GM13976 (cell line): ENCODE measurements at regions of chr2 and their contacts with region 1.

Region 1: DNA sequence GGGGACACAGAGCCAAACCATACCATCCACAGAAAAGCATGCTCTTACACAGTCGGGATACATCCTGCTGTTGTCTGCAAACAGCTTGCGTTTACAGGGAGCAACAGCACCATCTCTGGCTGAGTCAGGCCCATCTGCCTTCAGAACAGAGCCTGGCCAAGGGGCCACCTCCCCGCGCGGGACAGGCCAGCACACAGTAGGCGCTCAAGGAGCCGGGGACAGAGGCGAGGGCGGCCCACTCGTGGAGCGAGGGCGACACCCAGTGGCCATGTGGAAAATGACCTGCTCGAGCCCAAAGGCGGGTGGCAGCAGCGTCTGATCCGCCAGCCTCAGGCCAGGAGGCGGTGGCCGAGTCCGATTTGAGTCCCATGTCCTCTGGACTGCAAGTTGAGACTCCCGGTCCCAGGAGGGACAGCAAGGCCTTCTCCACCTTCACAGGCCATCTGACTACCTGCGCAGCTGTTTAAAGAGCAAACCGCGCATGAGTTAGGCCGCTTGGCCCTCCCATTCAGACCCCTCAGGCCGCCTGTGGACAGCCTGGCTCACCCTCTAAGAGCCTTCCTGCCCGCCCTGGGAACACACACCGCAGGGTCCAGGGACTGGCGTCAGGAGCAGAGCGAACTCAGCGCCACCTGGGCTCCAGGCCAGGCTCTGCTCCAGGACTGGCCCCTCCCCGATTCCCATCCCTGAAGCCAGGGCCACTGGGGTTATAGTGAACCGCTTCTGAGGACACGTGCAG is 38.3 kb downstream of the TTC32 start:
- DNase-seq: peak; percentile 90
- CTCF ChIP-seq: peak; percentile 96

Region 2: GRCh38 chr2:18546567-18546966 is 1316.9 kb before region 1 on chr2:
- in situ Hi-C with region 1: loop called (anchors 25 kb)
- DNase-seq: no peak
- CTCF ChIP-seq: no peak

Region 3: DNA sequence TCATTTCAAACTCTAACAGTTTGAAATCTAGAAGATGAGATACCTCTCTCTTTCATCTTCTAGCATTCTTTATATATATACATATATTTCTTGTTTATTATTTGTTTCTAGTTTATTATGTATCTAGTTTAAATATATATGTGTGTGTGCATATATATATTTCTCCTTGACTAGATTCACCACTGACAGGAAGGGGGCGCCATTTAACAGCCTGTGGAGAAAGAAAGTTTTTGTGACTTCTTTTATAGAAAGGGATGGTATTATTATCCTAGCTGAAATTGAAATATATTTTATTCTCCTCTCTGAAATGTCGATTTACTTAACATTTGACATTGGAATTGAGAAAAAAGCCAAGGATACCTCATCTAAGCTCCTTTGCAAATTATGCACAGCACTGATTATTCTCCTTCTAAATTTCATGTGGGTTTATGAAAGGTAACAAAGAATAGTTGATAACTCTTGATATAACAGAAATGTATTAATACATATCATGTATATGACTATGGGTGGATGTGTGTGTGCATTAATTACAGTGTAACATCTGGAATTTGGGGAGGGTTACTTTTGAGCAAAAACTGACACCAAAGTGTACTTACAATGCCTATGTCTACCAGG is 1113.5 kb before region 1 on chr2:
- in situ Hi-C with region 1: loop called (anchors 25 kb)
- DNase-seq: peak; percentile 26
- CTCF ChIP-seq: peak; percentile 56

Region 4: GRCh38 chr2:19349911-19350677 is 513.4 kb before region 1 on chr2:
- in situ Hi-C with region 1: loop called (anchors 10 kb)
- DNase-seq: peak; percentile 80
- CTCF ChIP-seq: peak; percentile 84

Region 5: GRCh38 chr2:19488009-19488691 is 375.3 kb before region 1 on chr2:
- in situ Hi-C with region 1: no loop called
- DNase-seq: no peak
- CTCF ChIP-seq: no peak

Region 6: DNA sequence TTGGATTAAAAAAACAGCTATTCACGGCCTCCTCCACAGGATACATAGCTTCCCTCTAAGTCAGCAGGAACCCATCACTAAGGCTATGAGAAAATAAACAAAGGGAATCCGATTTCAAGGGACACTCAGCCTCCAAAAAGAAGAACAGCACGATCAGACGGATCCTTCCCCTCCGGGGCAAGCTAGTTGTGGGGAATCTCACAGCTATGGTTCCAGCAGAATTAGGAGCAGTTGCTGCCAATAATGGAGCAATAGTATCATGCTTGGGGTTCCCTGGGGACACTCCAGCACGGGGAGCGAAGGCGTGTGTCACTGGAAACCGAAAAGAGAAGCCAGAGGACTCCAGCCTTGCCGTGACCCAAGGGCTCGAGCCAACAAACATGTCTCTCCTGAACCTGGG is 124.8 kb before region 1 on chr2:
- in situ Hi-C with region 1: no loop called
- DNase-seq: no peak
- CTCF ChIP-seq: no peak

Region 7: DNA sequence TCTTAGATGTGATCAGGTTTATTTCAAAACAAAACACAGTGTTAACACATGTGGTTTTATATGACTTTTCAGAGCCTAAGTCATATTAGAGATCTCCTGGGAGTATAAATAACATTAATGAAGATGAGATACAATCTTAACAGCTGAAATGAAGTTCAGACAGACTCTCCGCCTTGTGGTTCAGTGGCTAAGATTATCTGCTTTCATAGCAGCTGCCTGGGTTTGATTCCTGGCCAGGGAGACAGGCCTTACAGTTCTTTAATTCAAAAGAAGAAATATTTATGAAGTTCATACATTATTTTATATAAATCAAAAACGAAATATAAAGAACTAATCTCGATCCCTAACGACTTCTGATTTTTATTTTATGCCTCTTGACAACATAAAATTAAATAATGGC is 73.5 kb after region 1 on chr2:
- in situ Hi-C with region 1: no loop called
- DNase-seq: no peak
- CTCF ChIP-seq: no peak

Region 8: GRCh38 chr2:20264629-20265028 is 401.2 kb after region 1 on chr2:
- in situ Hi-C with region 1: no loop called
- DNase-seq: no peak
- CTCF ChIP-seq: no peak